Ovary (tissue), 10 donors: ENCODE measurements at regions of chr4 and their contacts with region 1.

Region 1: DNA sequence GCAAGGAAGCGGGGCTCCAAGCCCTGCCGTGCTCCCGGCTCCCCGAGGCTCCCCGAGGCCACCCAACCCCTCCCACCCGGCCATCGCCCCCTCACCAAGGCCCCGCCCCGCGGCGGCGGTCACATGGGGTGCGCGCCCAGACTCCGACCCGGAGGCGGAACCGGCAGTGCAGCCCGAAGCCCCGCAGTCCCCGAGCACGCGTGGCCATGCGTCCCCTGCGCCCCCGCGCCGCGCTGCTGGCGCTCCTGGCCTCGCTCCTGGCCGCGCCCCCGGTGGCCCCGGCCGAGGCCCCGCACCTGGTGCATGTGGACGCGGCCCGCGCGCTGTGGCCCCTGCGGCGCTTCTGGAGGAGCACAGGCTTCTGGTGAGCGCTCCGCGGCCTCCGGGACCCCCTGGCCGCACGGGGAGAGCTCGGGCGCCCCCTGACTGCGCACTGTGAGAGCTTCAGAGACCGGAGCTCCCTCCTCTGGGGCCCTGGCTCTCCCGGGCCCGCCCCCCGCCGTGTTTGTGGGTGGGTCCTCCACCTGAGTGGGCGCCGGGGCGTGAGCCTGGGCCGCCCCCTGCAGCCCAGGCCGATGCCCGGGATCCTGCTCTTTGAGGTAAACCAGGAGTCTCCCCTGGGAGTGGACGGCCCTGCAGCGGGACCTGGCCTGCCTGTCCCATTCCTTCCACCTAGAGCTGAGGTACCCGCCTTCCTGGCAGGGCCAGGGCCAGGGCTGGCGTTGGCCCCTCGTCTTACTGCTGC is at the start of gene IDUA:
- DNase-seq: peak; percentile 75 to 85 (median 81)
- H3K4me3 ChIP-seq: peak within 1 kb of the TSS; percentile 68
- H3K27ac ChIP-seq: peak within 1 kb of the TSS; percentile 44 to 52
- H3K4me1 ChIP-seq: peaks cover 14% of the 10 kb centered on the region
- H3K27me3 ChIP-seq: no peaks in the 10 kb centered on the region
- CTCF ChIP-seq: peak; percentile 25 to 63 (median 48)
- EP300 ChIP-seq: no peak
- POLR2A ChIP-seq: no peak
- total RNA-seq, gene IDUA: 13.9 to 49.1 (median 33.9) TPM

Region 2: DNA sequence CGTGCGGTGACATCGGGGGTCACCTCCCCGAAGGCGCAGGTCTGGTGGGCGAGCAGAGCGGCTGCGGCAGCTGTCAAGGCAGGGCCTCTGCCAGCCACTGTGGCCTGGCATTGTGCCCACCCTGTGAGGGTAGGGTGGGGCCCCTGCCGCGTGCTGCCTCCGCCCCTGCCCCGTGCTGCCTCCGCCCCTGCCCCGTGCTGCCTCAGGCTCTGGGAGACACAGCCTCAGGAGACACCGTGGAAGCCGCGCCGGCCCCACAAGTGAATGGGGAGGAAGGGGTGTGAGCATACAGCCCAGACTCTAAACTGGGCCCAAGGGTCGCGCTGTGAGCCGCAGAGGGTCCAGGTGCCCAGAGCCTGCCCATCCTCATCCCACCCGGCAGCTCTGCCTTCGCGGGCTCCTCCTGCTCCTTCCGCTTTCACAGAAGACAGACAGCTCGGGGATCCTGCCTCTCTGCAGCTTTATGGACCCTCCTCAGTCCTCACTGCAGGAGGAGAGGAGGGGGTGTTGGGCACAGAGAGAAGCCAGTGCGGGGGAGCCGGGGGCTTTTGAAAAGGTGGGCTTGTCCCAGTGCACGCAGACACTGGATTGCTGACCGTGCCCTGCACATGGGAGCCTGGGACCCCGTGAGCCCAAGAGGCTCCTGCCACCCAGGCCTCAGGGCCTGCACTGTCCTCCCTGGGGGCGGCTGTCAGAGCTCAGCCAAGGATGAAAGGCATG is 254.0 kb before region 1 on chr4:
- intact Hi-C with region 1: loop called in 1 of 4 experiments (anchors 10 kb)
- DNase-seq: no peak
- H3K4me3 ChIP-seq: no peak overlapping the region
- H3K27ac ChIP-seq: no peak overlapping the region
- H3K4me1 ChIP-seq: no peaks in the 10 kb centered on the region
- H3K27me3 ChIP-seq: no peaks in the 10 kb centered on the region
- CTCF ChIP-seq: no peak
- EP300 ChIP-seq: no peak
- POLR2A ChIP-seq: no peak

Region 3: DNA sequence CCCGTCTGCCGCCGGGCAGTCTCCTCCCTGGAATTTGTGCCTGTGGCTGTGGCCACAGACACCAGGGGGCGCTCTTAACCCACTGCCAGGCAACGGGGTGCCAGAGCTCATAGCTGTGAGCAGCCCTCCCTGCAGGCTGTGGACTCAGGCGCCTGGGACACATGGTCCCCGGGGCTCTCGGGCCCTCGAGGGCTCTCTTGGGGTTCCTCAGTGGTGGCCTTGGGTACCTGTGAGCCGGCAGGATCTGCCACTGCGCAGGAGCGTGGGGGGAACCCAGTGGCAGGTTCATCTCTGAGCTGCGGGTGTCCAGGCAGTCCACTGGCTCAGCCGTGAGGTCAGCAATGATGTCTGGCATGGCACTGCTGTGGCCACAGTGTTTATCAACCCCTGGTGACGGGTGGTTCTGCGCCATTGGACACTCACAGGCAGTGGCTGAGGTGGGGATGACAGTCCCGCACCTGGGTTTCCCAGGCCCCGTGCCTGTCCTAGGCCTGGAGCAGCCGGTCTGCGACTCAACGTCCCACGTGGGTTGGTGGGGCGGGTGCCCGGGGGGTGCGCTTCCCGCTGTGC is 244.2 kb before region 1 on chr4:
- intact Hi-C with region 1: loop called in 3 of 4 experiments (anchors 5 to 10 kb)
- DNase-seq: peak; percentile 46 to 80 (median 75)
- H3K4me3 ChIP-seq: no peak overlapping the region
- H3K27ac ChIP-seq: no peak overlapping the region
- H3K4me1 ChIP-seq: no peaks in the 10 kb centered on the region
- H3K27me3 ChIP-seq: no peaks in the 10 kb centered on the region
- CTCF ChIP-seq: peak; percentile 69 to 79 (median 70)
- EP300 ChIP-seq: no peak
- POLR2A ChIP-seq: no peak